PC-9 (cell line): ENCODE measurements at regions of chr2 and their contacts with region 1.

Region 1: GRCh38 chr2:121649596-121650314 is 493 bp upstream of the CLASP1 start:
- DNase-seq: peak; percentile 95 to 96
- H3K4me3 ChIP-seq: peak overlapping the region; percentile 69
- H3K27ac ChIP-seq: peak overlapping the region; percentile 81
- H3K4me1 ChIP-seq: peaks cover 23% of the 10 kb centered on the region
- H3K27me3 ChIP-seq: no peaks in the 10 kb centered on the region
- CTCF ChIP-seq: no peak

Region 2: DNA sequence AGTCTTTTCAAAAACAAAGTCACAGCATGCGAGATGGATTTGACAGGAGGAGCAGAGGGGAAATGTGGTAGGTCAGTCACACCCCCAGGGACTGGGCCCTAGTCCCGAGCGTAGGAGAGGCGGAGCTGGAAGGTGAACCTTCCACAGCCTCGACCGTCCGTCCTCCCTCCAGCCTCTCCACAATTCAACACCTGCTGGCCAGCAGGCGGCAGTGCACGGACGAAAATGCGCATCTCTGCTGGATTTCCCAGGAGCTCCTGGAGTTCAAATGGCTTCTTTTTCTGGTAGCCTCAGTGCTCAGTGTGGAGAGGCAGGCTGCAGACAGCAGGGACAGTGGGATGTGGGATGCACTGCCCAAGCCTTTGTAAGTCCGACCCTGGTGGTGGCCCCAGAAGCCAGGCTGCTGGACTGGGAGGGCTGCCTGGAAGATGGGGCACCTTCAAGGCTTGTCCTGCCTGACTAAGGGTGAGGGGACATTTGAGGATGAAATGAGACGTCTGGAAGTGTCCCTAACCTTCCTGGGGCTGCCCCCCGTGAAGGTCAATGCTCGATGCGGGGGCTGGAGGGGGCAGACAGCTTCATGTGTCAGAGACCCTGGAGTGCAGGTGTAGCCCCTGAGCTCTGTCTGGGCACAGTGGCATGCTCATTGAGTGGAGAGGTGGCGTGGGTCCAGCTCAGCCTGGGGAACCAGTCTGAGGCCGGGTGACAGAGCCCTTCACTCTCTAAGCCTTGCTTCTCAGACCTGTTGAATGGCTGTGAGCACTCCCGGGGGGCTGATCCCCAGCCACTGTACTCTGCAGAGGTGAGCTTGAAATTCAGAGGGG is 554.3 kb before region 1 on chr2:
- CTCF ChIA-PET with region 1: interaction called, 17 read pairs
- POLR2A ChIA-PET with region 1: no interaction called
- intact Hi-C with region 1: no loop called
- DNase-seq: peak; percentile 60 to 68
- H3K4me3 ChIP-seq: no peak overlapping the region
- H3K27ac ChIP-seq: no peak overlapping the region
- H3K4me1 ChIP-seq: peaks cover 6% of the 10 kb centered on the region; the same call in 1 of the 2 replicates
- H3K27me3 ChIP-seq: peaks cover 4% of the 10 kb centered on the region; the same call in 1 of the 2 replicates
- CTCF ChIP-seq: peak; percentile 88

Region 3: DNA sequence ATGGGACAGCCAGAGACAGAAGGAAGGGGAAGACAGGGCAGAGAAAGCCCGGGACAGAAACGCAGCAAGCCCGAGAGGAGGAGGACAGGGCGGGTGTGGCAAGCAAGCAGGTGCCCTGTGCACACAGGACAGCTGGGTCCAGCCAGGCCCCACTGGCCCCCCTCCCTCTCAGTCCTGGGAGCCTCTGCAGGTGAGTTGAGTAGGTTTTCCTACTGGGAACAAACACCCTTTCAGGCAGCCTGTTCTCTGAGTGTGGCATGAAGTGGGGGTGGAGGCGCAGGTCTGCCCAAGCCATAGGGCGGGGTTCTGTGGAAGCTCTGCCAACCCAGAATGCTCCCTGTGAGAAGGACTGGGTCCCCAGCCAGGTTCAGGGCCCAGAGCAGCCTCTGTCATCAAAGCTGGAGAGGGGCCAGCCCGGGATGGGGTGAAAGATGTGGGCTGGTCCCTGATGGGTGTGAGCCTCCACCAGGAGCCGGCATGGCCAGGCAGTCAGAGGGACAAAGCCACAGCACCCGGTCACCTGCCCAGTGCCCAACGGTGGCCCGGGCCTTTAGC is 494.2 kb before region 1 on chr2:
- CTCF ChIA-PET with region 1: no interaction called
- POLR2A ChIA-PET with region 1: no interaction called
- intact Hi-C with region 1: no loop called
- DNase-seq: peak in 1 of 2 experiments; percentile 63
- H3K4me3 ChIP-seq: no peak overlapping the region
- H3K27ac ChIP-seq: no peak overlapping the region
- H3K4me1 ChIP-seq: peaks cover 20% of the 10 kb centered on the region
- H3K27me3 ChIP-seq: no peaks in the 10 kb centered on the region
- CTCF ChIP-seq: no peak

Region 4: DNA sequence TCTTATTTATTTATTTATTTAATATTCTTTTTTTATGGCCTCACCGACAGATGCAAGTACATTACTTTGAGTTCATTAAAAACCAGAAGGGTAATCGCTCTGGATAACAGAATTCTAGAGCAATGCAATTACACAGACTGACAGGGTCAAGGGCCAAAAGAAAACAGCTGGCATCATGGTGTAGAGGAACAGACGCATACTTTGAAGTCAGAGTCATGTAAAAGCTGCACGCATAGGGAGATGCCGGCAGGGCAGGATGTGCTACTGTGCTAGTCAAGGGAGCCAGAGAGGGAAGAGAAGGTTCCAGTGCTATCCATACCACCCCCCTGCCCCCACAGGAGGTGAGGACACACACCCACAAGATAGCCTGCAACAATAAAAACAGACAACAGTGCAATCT is 249.6 kb before region 1 on chr2:
- CTCF ChIA-PET with region 1: no interaction called
- POLR2A ChIA-PET with region 1: no interaction called
- intact Hi-C with region 1: loop called (anchors 10 kb)
- DNase-seq: no peak
- H3K4me3 ChIP-seq: no peak overlapping the region
- H3K27ac ChIP-seq: no peak overlapping the region
- H3K4me1 ChIP-seq: no peaks in the 10 kb centered on the region
- H3K27me3 ChIP-seq: no peaks in the 10 kb centered on the region
- CTCF ChIP-seq: no peak

Region 5: DNA sequence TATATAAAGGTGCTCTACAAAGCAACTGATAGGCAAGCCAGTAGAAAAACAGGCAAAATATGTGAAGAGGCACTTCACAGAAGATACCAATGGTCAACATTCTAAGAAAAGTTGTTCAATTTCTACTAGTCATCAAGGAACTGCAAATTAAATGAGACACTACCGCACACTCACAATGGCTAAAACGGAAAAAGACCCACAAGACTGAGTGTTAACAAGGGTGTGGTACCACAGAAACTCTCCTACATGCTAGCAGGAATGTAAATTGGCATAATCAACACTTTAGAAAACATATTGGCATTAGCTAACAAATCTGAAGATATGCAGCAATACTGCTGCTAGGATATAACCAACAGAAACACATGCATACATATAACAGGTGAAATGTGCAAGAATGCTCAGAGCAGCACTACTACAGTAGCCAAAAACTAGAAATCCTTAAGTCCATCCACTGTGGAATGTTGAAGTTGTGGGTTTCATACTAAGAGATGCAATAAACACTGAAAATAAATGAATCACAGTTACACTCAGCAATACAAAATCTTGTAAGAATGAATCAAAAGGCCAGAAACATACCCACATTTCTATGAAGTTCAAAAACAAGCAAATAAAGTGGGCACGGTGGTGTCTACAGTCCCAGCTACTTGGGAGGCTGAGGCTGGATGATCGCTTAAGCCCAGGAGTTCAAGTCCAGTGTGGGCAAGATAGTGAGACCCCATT is 109.8 kb before region 1 on chr2:
- CTCF ChIA-PET with region 1: no interaction called
- POLR2A ChIA-PET with region 1: interaction called, 13 read pairs
- intact Hi-C with region 1: no loop called
- DNase-seq: no peak
- H3K4me3 ChIP-seq: no peak overlapping the region
- H3K27ac ChIP-seq: no peak overlapping the region
- H3K4me1 ChIP-seq: no peaks in the 10 kb centered on the region
- H3K27me3 ChIP-seq: no peaks in the 10 kb centered on the region
- CTCF ChIP-seq: no peak

Region 6: DNA sequence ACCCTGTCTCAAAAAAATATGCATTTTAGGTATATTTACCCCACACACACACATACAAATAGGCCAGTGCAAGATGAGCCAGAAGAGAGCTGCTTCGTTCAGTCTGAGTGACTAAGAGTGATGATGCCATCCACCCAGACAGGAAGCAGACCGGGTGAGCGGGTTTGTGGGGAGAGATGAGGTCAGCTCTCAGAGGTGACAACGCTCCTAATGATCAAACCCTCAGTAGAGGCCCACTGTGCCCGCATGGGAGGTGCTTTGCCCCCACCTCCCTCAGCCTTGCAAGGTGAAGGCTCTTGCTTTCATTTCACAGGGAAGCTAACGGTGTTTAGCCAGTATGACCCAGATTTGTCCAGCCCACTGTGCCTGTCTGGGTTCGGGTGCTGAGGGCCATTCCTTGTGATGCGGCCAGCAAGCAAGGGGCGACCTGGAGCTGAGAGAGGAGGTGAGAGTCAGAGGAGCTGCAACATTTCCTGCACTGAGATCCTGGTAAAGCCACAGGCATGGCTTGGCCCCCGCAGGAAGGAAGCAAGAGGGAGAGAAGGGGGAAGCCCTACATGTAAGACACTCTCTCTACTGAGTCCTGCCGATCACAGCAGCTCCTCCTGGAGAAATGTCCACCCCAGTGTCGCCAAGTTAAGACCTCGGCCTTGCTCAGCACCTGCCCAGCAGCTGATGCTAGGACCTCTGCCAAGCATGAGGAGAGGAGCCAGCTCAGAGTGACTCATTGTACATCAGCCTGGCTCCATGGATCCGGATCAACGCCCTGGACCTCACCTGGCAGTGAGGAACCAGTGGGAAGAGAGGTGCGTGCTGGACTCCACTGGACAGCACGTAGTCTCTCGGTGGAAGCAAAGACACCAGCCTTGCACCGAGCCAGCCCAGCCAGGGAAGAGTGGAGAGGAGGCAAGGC is 49.9 kb after region 1 on chr2:
- CTCF ChIA-PET with region 1: no interaction called
- POLR2A ChIA-PET with region 1: no interaction called
- intact Hi-C with region 1: loop called (anchors 1 kb)
- DNase-seq: peak; percentile 85 to 95
- H3K4me3 ChIP-seq: peak overlapping the region; percentile 26; the same call in 1 of the 2 replicates
- H3K27ac ChIP-seq: peak overlapping the region; percentile 81
- H3K4me1 ChIP-seq: peaks cover 58% of the 10 kb centered on the region
- H3K27me3 ChIP-seq: no peaks in the 10 kb centered on the region
- CTCF ChIP-seq: no peak

Region 7: DNA sequence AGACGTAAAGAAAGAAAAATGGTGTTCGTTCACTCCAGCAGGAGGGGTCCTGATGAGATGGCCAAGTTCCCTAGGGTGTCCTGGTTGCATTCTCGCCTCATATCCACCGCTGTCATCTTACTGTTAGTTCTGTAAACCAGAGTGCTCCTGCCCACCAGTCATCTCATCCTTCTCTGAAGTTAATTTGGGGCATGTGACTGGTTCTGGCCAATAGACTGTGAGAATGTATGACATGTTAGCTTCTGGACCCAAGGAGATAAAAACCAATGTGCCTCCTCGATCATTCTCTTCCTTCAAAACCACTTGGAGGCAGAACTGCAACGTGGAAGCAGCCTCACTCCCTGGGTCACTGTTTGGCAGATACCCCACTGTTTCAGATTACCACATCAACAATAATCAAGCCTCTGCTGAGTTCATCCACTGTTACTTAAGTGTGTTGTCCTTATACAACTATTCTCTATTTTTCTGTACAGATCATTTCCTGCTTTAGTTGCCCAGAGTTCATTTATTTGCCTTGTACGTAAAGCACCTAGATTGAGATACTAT is 864.8 kb after region 1 on chr2:
- CTCF ChIA-PET with region 1: no interaction called
- POLR2A ChIA-PET with region 1: no interaction called
- intact Hi-C with region 1: no loop called
- DNase-seq: no peak
- H3K4me3 ChIP-seq: no peak overlapping the region
- H3K27ac ChIP-seq: no peak overlapping the region
- H3K4me1 ChIP-seq: no peaks in the 10 kb centered on the region
- H3K27me3 ChIP-seq: no peaks in the 10 kb centered on the region
- CTCF ChIP-seq: no peak